CD4-positive, alpha-beta T cell (primary cell): ENCODE measurements at regions of chr18 and their contacts with region 1.

Region 1: GRCh38 chr18:41767960-41768359 is 187.1 kb upstream of the PIK3C3 start:
- DNase-seq: no peak
- ATAC-seq: no peak
- H3K4me3 ChIP-seq: no peak overlapping the region
- H3K4me3 Mint-ChIP-seq: no peak overlapping the region
- H3K27ac ChIP-seq: no peak overlapping the region
- H3K27ac Mint-ChIP-seq: no peak overlapping the region
- H3K4me1 ChIP-seq: no peaks in the 10 kb centered on the region
- H3K4me1 Mint-ChIP-seq: no peaks in the 10 kb centered on the region
- H3K27me3 ChIP-seq: no peaks in the 10 kb centered on the region
- H3K27me3 Mint-ChIP-seq: no peaks in the 10 kb centered on the region
- CTCF ChIP-seq: no peak

Region 2: GRCh38 chr18:41666246-41666645 is 101.7 kb before region 1 on chr18:
- CTCF ChIA-PET with region 1: no interaction called
- POLR2A ChIA-PET with region 1: no interaction called
- intact Hi-C with region 1: no loop called
- DNase-seq: no peak
- ATAC-seq: no peak
- H3K4me3 ChIP-seq: no peak overlapping the region
- H3K4me3 Mint-ChIP-seq: no peak overlapping the region
- H3K27ac ChIP-seq: no peak overlapping the region
- H3K27ac Mint-ChIP-seq: no peak overlapping the region
- H3K4me1 ChIP-seq: no peaks in the 10 kb centered on the region
- H3K4me1 Mint-ChIP-seq: no peaks in the 10 kb centered on the region
- H3K27me3 ChIP-seq: no peaks in the 10 kb centered on the region
- H3K27me3 Mint-ChIP-seq: no peaks in the 10 kb centered on the region
- CTCF ChIP-seq: no peak

Region 3: DNA sequence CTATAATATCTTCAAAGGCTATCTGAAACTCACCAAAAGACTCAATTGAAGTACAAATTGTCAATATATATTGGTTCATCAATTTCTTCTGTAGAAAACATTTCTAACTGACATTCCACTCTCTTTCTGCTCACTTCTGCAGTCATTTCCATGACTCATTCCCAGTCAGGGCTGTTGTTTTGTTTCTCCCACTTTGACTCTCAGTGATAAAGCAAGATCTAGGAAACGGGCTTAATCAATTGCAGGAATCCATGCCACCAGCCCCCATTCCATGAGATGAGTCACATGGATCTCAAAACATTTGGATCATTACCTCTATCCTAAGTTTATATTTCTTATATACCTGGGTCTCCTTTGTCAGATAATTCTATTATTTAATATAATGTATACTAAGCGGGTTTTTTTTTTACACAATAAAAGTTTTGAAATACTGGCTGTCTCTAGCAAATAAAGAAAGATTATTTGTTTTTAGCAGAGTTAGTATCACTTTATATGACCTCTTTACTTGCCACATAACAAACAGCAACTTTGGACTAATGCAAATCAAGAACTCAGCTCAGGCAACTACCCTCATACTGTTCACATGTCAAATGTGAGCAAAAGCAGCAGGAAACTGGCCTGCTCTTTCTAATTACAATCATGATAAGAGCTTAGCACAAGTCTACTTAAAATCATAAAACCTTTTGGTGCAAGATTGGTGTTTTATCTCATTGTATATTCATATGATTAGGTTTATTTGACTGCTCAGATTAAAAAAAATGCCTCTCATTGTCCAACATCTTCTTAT is 64.0 kb before region 1 on chr18:
- CTCF ChIA-PET with region 1: no interaction called
- POLR2A ChIA-PET with region 1: no interaction called
- intact Hi-C with region 1: loop called in 1 of 2 experiments (anchors 10 kb)
- DNase-seq: no peak
- ATAC-seq: no peak
- H3K4me3 ChIP-seq: no peak overlapping the region
- H3K4me3 Mint-ChIP-seq: no peak overlapping the region
- H3K27ac ChIP-seq: no peak overlapping the region
- H3K27ac Mint-ChIP-seq: no peak overlapping the region
- H3K4me1 ChIP-seq: no peaks in the 10 kb centered on the region
- H3K4me1 Mint-ChIP-seq: no peaks in the 10 kb centered on the region
- H3K27me3 ChIP-seq: no peaks in the 10 kb centered on the region
- H3K27me3 Mint-ChIP-seq: no peaks in the 10 kb centered on the region
- CTCF ChIP-seq: no peak

Region 4: DNA sequence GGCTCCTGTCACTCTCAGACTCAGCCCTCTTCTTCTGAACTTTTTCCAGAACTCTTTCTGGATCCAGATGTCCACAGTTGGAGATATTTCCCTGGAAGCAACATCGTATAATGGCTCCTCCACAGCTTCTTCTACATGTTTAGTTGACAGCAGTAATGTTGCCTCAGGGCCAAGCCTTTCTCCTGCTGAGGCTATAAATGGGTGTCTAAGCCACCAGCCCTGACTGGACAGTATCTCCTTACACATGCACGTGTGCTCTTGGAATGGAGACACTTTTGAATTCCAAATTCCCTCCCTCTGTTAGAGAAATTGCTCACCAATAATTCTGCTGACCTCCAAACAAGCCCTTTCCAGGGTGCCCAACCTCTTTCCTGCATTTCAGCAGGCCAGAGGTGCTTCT is 30.9 kb after region 1 on chr18:
- CTCF ChIA-PET with region 1: no interaction called
- POLR2A ChIA-PET with region 1: no interaction called
- intact Hi-C with region 1: no loop called
- DNase-seq: no peak
- ATAC-seq: no peak
- H3K4me3 ChIP-seq: no peak overlapping the region
- H3K4me3 Mint-ChIP-seq: no peak overlapping the region
- H3K27ac ChIP-seq: no peak overlapping the region
- H3K27ac Mint-ChIP-seq: no peak overlapping the region
- H3K4me1 ChIP-seq: no peaks in the 10 kb centered on the region
- H3K4me1 Mint-ChIP-seq: no peaks in the 10 kb centered on the region
- H3K27me3 ChIP-seq: no peaks in the 10 kb centered on the region
- H3K27me3 Mint-ChIP-seq: no peaks in the 10 kb centered on the region
- CTCF ChIP-seq: no peak

Region 5: GRCh38 chr18:41828137-41828536 is 60.2 kb after region 1 on chr18:
- CTCF ChIA-PET with region 1: no interaction called
- POLR2A ChIA-PET with region 1: no interaction called
- intact Hi-C with region 1: no loop called
- DNase-seq: no peak
- ATAC-seq: no peak
- H3K4me3 ChIP-seq: no peak overlapping the region
- H3K4me3 Mint-ChIP-seq: no peak overlapping the region
- H3K27ac ChIP-seq: no peak overlapping the region
- H3K27ac Mint-ChIP-seq: no peak overlapping the region
- H3K4me1 ChIP-seq: no peaks in the 10 kb centered on the region
- H3K4me1 Mint-ChIP-seq: no peaks in the 10 kb centered on the region
- H3K27me3 ChIP-seq: peaks cover 0 to 3% of the 10 kb centered on the region in 2 experiments
- H3K27me3 Mint-ChIP-seq: no peaks in the 10 kb centered on the region
- CTCF ChIP-seq: no peak

Region 6: GRCh38 chr18:41906528-41907146 is 138.7 kb after region 1 on chr18:
- CTCF ChIA-PET with region 1: no interaction called
- POLR2A ChIA-PET with region 1: no interaction called
- intact Hi-C with region 1: no loop called
- DNase-seq: peak in 9 of 14 experiments; percentile 1 to 75 (median 5)
- ATAC-seq: peak; percentile 83
- H3K4me3 ChIP-seq: no peak overlapping the region
- H3K4me3 Mint-ChIP-seq: no peak overlapping the region
- H3K27ac ChIP-seq: no peak overlapping the region
- H3K27ac Mint-ChIP-seq: no peak overlapping the region
- H3K4me1 ChIP-seq: peaks cover 4% of the 10 kb centered on the region
- H3K4me1 Mint-ChIP-seq: peaks cover 13% of the 10 kb centered on the region
- H3K27me3 ChIP-seq: no peaks in the 10 kb centered on the region
- H3K27me3 Mint-ChIP-seq: no peaks in the 10 kb centered on the region
- CTCF ChIP-seq: peak; percentile 93